ENCODE measurements at regions of chr10 and their contacts with region 1.

Region 1: GRCh38 chr10:77846718-77847630 is 79.6 kb downstream of the DLG5 start:
- DNase-seq: peak; percentile 79 to 83
- H3K4me3 ChIP-seq: no peak overlapping the region
- H3K27ac ChIP-seq: peak overlapping the region; percentile 12 to 94 (median 86)
- H3K4me1 ChIP-seq: peaks cover 45 to 56% of the 10 kb centered on the region in 2 donors
- H3K27me3 ChIP-seq: no peaks in the 10 kb centered on the region
- CTCF ChIP-seq: peak; percentile 91 to 99 (median 94)
- POLR2A ChIP-seq: no peak

Region 2: DNA sequence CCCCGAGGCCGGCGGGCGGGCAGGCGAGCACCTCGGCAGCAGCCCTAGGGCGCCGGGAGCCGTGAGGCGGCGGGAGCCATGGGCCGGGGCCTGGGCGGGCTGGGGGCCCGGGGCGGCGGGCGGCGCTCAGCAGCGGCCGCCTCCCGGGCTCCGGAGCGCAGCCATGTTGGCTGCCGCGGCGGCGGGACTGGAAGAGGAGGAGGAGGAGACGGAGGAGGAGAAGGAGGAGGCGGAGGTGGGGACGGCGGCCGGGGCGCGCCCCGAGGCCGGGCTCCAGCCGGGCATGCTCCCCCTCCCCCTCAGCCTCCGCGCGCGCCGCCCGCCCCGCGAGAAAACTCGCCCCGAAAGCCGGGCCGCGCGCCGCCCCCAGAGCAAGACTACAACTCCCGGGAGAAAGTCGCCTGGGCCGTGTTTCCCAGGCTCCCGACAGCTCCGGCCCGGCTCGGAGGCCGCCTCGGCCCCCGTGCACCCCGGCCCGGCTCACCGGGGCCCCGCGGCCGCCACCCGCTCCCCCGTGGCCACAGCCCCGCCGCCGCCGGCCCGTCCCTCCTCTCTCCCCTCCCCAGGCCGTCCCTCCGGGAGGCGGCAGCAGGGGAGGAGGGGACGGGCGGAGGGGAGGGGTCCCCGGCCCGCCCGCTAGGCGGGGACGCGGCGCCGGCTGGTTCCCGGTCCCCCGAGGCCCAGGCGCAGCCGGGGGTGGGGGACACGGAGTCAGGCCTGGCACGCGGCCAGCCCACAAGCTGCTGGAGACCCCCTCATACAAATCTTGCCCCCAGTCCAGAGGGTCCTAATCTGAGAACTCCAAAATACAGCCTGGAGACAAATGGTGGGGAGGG is 79.8 kb after region 1 on chr10 and contains the start of gene DLG5:
- intact Hi-C with region 1: loop called (anchors 5 kb)
- DNase-seq: peak; percentile 79 to 80
- H3K4me3 ChIP-seq: peak within 1 kb of the TSS; percentile 25 to 78 (median 61)
- H3K27ac ChIP-seq: peak within 1 kb of the TSS; percentile 51 to 80 (median 79)
- H3K4me1 ChIP-seq: peaks cover 13 to 26% of the 10 kb centered on the region in 2 donors
- H3K27me3 ChIP-seq: no peaks in the 10 kb centered on the region
- CTCF ChIP-seq: no peak
- POLR2A ChIP-seq: peak in 1 of 2 donors; percentile 66
- total RNA-seq, gene DLG5: 45.4 to 92.4 (median 61.2) TPM

Region 3: DNA sequence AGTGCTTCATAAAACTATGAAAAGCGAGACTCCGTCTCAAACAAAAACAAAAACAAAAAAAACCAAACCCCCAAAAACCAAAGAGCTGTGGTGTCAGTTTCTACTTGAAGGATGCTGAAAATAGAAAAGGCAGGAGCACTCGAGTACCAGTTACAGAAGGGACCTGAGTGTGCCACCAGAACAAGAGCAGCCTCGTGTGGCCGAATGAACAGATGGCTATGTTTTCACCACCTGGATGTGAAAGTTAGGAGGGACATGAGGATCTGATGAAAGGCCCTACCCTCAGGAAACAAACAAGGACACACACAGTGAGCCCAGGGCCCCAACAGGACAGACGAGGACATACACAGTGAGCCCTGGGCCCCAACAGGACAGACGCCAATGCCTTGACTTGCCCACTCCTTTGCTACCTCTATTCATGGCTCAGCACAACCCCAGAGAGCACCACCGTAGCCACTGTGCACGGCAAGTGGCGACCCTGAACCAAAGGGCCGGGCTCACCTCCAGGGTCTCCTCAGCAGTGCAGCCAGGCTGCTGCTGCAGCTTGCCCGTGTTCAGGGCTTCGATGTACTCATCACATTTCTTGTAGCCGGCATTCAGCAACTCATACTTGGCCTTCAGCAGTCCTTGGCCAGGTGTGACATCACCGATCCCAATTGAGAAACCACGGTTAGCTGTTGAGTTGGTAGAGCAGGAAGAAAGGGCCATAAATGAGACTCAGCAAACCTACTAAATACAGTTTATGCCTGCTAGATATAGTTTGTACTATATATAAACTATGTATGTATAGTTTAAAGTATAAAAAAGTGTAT is 157.4 kb after region 1 on chr10:
- intact Hi-C with region 1: loop called (anchors 10 kb)
- DNase-seq: no peak
- H3K4me3 ChIP-seq: no peak overlapping the region
- H3K27ac ChIP-seq: no peak overlapping the region
- H3K4me1 ChIP-seq: peaks cover 15 to 20% of the 10 kb centered on the region in 2 donors
- H3K27me3 ChIP-seq: no peaks in the 10 kb centered on the region
- CTCF ChIP-seq: no peak
- POLR2A ChIP-seq: no peak

Region 4: GRCh38 chr10:78139341-78139740 is 292.4 kb after region 1 on chr10:
- intact Hi-C with region 1: no loop called
- DNase-seq: no peak
- H3K4me3 ChIP-seq: no peak overlapping the region
- H3K27ac ChIP-seq: no peak overlapping the region
- H3K4me1 ChIP-seq: no peaks in the 10 kb centered on the region
- H3K27me3 ChIP-seq: no peaks in the 10 kb centered on the region
- CTCF ChIP-seq: no peak
- POLR2A ChIP-seq: no peak